A549 (cell line): ENCODE measurements at regions of chr19 and their contacts with region 1.

Region 1: DNA sequence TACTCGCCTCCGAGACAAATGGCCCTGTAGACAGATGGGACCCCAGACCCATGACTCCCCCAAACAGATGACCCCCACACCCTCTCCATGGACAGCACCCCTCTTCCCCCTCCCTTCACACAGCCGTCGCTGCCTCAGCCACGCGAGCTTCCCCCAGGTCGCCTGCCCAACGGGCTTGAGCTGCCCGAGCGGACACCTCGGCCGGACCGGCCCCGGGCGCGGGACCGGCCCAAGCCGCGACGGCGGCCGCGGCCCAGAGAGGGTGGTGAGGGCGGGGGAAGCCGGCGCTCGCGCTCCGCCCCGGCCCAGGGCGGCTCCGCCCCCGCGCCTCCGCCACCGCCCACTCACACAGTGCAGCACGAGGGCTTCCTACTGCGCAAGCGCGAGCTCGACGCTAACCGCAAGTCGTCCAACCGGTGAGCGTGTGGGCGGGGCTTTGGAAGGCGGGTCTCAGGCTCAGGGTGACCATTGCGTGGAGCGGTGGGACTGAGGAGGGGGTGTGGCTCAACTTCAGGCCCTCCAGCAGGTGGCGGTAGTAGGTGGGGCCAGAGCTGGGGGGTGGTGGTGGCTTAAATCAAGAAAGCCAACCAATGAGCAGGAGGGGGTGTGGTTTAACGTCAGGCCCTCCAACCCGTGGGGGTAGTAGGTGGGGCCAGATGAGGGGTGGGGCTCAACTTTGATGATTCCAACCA is 6.2 kb upstream of the SHKBP1 start:
- DNase-seq: peak; percentile 100
- ATAC-seq: peak; percentile 80 to 91
- H3K4me3 ChIP-seq: peak overlapping the region; percentile 56
- H3K27ac ChIP-seq: peak overlapping the region; percentile 84 to 89
- H3K4me1 ChIP-seq: peaks cover 17% of the 10 kb centered on the region
- CTCF ChIP-seq: peak; percentile 59
- EP300 ChIP-seq: no peak
- POLR2A ChIP-seq: peak; percentile 78
- RAD21 ChIP-seq: peak; percentile 55 to 59

Region 2: DNA sequence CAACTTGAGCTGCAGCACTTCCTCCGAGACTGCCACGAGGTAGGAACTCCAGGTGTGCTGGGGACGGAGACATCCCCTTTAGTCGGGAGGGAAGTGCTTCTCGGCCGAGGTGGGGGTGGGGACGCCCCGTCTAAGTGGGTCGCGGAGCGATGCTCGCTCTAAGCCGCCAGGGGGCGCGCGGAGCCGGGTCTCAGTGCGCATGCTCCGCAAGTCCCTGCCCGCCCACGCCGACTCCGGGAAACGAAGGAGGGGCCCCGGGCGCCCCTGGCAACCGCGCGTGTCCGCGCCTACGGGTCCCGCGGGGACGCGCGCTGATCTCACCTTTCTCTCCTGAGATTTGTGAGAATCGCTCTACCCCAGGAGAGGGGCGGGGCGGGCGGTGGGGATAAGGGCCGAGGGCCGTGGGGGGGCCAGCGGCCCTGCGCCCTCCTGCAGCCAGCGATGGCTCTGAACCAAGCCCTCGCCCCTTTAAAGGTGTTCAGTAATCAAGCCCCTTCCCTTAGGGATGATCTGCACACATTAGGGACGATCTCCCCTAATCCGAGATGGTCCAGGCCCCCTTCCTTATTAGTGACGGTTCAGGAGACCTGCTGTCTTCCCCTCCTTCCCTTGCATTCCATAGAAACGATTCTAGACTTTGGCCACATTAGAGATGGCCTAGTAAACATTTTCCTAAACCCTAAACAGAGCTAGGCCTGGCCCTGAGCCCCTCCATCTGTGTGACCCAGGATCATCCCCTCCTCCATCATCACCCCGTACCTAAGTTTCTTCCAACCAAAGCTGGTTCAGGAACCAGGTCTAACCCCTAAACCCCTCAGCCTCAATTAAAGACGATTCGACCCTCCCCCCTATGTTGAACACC is 41.1 kb before region 1 on chr19:
- CTCF ChIA-PET with region 1: interaction called, 971 read pairs
- POLR2A ChIA-PET with region 1: interaction called, 3 read pairs
- DNase-seq: peak; percentile 94 to 100
- ATAC-seq: peak; percentile 37 to 78
- H3K4me3 ChIP-seq: peak overlapping the region; percentile 50
- H3K27ac ChIP-seq: peak overlapping the region; percentile 55 to 79
- H3K4me1 ChIP-seq: peaks cover 18% of the 10 kb centered on the region
- CTCF ChIP-seq: peak; percentile 99
- EP300 ChIP-seq: 0 out of 5 replicates have a peak, but pooled peaks of 1 of the 2 experiments have one; percentile 17
- POLR2A ChIP-seq: no peak
- RAD21 ChIP-seq: peak; percentile 43 to 72; a peak in 4 of 5 replicates

Region 3: DNA sequence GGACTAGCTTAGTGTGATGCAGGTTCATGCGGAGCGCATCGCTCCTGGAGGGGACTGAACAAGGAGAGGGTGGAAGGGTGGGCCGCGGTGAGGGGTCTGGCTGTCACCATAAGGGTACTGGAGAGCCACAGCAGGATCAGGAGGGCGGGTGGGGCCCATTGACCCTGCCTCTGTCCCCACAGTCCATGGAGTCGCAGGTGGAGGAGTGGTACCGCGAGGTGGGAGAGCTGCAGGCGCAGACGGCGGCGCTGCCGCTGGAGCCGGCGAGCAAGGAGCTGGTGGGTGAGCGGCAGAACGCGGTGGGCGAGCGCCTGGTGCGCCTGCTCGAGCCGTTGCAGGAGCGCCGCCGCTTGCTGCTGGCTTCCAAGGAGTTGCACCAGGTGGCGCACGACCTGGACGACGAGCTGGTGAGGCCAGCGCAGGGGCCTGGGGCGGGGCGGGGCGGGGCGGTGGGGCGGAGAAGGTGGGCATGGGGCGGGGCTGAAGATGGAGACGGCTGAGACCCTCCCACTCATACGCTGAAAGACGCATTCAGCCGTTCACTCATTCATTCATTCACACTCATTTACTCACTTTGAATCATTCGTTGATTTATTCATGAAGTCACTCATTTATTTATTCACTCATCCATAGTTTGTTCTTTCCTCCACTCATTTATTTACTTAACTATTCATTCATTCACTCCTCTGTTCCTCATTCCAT is 21.3 kb before region 1 on chr19:
- CTCF ChIA-PET with region 1: interaction called, 971 read pairs
- POLR2A ChIA-PET with region 1: interaction called, 21 read pairs
- DNase-seq: peak; percentile 92
- ATAC-seq: peak; percentile 97 to 99
- H3K4me3 ChIP-seq: peak overlapping the region; percentile 33
- H3K27ac ChIP-seq: peak overlapping the region; percentile 49 to 68; a peak in 4 of 6 replicates
- H3K4me1 ChIP-seq: peaks cover 5% of the 10 kb centered on the region
- CTCF ChIP-seq: peak; percentile 85
- EP300 ChIP-seq: no peak; a peak in 1 of 5 replicates
- POLR2A ChIP-seq: no peak
- RAD21 ChIP-seq: peak; percentile 63 to 90

Region 4: GRCh38 chr19:40592170-40592569 is 21.7 kb after region 1 on chr19:
- CTCF ChIA-PET with region 1: interaction called, 2,247 read pairs
- POLR2A ChIA-PET with region 1: interaction called, 11 read pairs
- DNase-seq: peak; percentile 81 to 92
- ATAC-seq: peak in 1 of 2 experiments; percentile 58; a peak in 3 of 6 replicates
- H3K4me3 ChIP-seq: no peak overlapping the region
- H3K27ac ChIP-seq: no peak overlapping the region
- H3K4me1 ChIP-seq: peaks cover 36% of the 10 kb centered on the region
- CTCF ChIP-seq: no peak
- EP300 ChIP-seq: no peak
- POLR2A ChIP-seq: no peak
- RAD21 ChIP-seq: no peak

Region 5: DNA sequence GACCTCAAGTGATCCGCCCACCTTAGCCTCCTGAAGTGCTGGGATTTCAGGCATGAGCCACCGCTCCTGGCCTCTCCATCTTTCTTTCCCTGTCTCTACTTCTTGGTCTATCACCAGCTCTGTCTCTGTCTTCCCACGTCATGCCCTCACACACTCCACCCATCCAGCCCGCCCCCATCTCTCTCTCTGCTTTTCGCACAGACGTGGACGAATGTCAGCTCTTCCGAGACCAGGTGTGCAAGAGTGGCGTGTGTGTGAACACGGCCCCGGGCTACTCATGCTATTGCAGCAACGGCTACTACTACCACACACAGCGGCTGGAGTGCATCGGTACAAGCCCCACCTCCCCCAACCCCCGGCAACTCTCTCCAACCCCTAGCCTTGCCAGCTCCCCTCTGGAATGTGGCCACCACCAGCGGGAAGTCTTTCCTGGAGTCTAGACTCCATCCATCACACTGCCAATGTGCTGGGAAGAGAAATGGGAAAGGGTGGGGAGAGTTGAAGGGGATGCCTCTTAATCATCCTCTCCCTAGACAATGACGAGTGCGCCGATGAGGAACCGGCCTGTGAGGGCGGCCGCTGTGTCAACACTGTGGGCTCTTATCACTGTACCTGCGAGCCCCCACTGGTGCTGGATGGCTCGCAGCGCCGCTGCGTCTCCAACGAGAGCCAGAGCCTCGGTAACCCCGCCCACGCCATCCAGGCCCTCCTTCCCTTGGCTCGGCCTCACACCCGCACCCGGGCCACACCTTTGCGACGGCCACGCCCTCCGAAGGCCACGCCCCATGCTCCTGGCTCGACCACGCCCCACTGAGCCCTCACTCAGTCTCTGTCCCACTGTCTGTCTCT is 53.2 kb after region 1 on chr19:
- CTCF ChIA-PET with region 1: interaction called, 10 read pairs
- POLR2A ChIA-PET with region 1: no interaction called
- DNase-seq: peak; percentile 86 to 90
- ATAC-seq: peak; percentile 74 to 91
- H3K4me3 ChIP-seq: no peak overlapping the region
- H3K27ac ChIP-seq: no peak overlapping the region
- H3K4me1 ChIP-seq: peaks cover 6% of the 10 kb centered on the region; the same call in 2 of the 3 replicates
- CTCF ChIP-seq: no peak
- EP300 ChIP-seq: no peak
- POLR2A ChIP-seq: no peak
- RAD21 ChIP-seq: no peak